K562 (cell line): ENCODE measurements at regions of chr1 and their contacts with region 1.

Region 1: DNA sequence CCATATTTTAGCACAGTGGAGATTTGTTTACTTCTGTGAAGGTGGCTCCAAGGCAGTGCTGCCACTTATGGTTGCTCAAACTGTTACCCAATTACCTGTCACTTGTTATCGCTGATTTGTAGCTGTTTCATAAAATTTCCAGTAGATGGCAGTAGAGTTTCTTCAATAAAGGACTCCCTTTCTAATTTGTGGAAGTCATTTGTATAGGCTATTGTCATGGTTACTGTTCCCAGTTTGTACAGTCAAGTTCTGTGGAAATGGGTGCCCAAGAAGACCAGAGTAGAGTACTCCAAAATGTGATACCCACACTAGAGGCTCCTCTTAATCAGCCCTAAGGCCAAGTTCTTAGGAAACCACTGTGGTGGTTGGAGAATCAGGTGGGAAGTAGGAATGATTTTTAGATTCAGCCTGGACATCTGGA is 186.1 kb downstream of the CLEC20A start:
- DNase-seq: peak; percentile 52 to 58 (median 54)
- ATAC-seq: peak; percentile 85
- H3K4me3 ChIP-seq: no peak overlapping the region
- H3K27ac ChIP-seq: no peak overlapping the region
- H3K4me1 ChIP-seq: no peaks in the 10 kb centered on the region
- H3K27me3 ChIP-seq: no peaks in the 10 kb centered on the region
- CTCF ChIP-seq: peak; percentile 45 to 82 (median 70); a peak in 5 of 6 replicates
- EP300 ChIP-seq: no peak
- POLR2A ChIP-seq: no peak
- RAD21 ChIP-seq: peak; percentile 72 to 76

Region 2: GRCh38 chr1:178501705-178502329 is 191.1 kb after region 1 on chr1:
- CTCF ChIA-PET with region 1: interaction called, 5 read pairs
- POLR2A ChIA-PET with region 1: no interaction called
- in situ Hi-C with region 1: no loop called
- intact Hi-C with region 1: loop called (anchors 2 kb)
- DNase-seq: peak; percentile 79 to 91 (median 87)
- ATAC-seq: peak; percentile 94
- H3K4me3 ChIP-seq: no peak overlapping the region
- H3K27ac ChIP-seq: no peak overlapping the region
- H3K4me1 ChIP-seq: peaks cover 4 to 5% of the 10 kb centered on the region in 2 experiments; a peak in 2 of 5 replicates
- H3K27me3 ChIP-seq: peaks cover 20 to 61% of the 10 kb centered on the region in 2 experiments
- CTCF ChIP-seq: peak; percentile 86 to 93 (median 89)
- EP300 ChIP-seq: no peak
- POLR2A ChIP-seq: no peak
- RAD21 ChIP-seq: peak; percentile 36 to 68; a peak in 3 of 4 replicates

Region 3: GRCh38 chr1:178513278-178514022 is 202.8 kb after region 1 on chr1:
- CTCF ChIA-PET with region 1: no interaction called
- POLR2A ChIA-PET with region 1: no interaction called
- in situ Hi-C with region 1: loop called (anchors 5 kb)
- intact Hi-C with region 1: no loop called
- DNase-seq: no peak
- ATAC-seq: peak; percentile 73
- H3K4me3 ChIP-seq: no peak overlapping the region
- H3K27ac ChIP-seq: no peak overlapping the region
- H3K4me1 ChIP-seq: no peaks in the 10 kb centered on the region
- H3K27me3 ChIP-seq: peaks cover 0 to 16% of the 10 kb centered on the region in 2 experiments; a peak in 2 of 5 replicates
- CTCF ChIP-seq: peak in 2 of 3 experiments; percentile 23 to 30; a peak in 3 of 6 replicates
- EP300 ChIP-seq: no peak
- POLR2A ChIP-seq: no peak
- RAD21 ChIP-seq: no peak

Region 4: GRCh38 chr1:178532392-178532791 is 221.7 kb after region 1 on chr1:
- CTCF ChIA-PET with region 1: interaction called, 3 read pairs
- POLR2A ChIA-PET with region 1: no interaction called
- in situ Hi-C with region 1: no loop called
- intact Hi-C with region 1: loop called (anchors 2 kb)
- DNase-seq: peak; percentile 84 to 89 (median 87)
- ATAC-seq: peak; percentile 98
- H3K4me3 ChIP-seq: no peak overlapping the region
- H3K27ac ChIP-seq: no peak overlapping the region
- H3K4me1 ChIP-seq: no peaks in the 10 kb centered on the region
- H3K27me3 ChIP-seq: peaks cover 4 to 38% of the 10 kb centered on the region in 2 experiments; a peak in 4 of 5 replicates
- CTCF ChIP-seq: peak; percentile 90 to 97 (median 92)
- EP300 ChIP-seq: no peak
- POLR2A ChIP-seq: no peak
- RAD21 ChIP-seq: peak; percentile 81 to 89

Region 5: GRCh38 chr1:178749581-178750166 is 439.0 kb after region 1 on chr1:
- CTCF ChIA-PET with region 1: no interaction called
- POLR2A ChIA-PET with region 1: no interaction called
- in situ Hi-C with region 1: no loop called
- intact Hi-C with region 1: loop called (anchors 5 kb)
- DNase-seq: no peak
- ATAC-seq: no peak
- H3K4me3 ChIP-seq: no peak overlapping the region
- H3K27ac ChIP-seq: no peak overlapping the region
- H3K4me1 ChIP-seq: no peaks in the 10 kb centered on the region
- H3K27me3 ChIP-seq: peaks cover 0 to 2% of the 10 kb centered on the region in 2 experiments; a peak in 3 of 5 replicates
- CTCF ChIP-seq: no peak
- EP300 ChIP-seq: no peak
- POLR2A ChIP-seq: no peak
- RAD21 ChIP-seq: no peak